CD8-positive, alpha-beta T cell (primary cell): ENCODE measurements at regions of chr2 and their contacts with region 1.

Region 1: DNA sequence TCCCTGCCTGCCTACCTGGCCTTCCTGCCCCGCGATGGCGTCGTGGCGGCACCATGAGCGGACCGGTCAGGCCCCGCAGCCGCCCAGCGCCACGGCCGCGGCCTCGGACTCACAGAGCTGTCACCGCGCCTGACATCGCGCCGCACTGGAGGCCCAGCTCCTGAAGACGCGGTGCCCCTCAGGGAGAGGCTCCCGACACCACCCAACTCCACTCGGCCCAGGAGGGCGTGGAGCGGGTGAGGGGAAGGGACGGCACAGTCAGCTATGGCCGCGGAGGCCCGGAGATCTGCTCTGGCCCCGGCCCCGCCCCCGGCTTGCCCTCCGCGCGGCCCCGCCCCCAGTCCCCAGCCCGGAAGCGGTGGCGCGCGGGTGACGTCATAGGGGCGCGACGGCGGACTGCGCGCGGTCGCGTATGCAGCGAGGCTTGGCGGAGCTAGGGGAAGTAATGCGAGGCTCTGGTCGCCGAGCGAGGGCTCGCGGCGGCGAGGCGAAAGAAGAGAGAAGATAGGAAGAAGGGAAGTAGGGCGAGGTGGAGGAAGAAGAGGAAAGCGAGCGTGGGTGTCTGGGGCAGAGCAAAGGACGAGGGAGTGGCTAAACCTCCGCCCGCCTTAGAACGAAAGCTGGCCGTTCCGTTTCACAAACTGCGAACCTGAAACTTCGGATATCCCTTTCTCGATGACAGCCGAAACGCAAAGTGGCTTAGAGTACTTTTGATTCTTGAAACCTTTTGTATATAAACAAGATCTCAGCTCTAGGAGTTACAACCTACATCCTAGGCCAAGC is at the start of gene SLC35F5:
- DNase-seq: peak; percentile 86 to 98 (median 94)
- ATAC-seq: peak; percentile 90
- H3K4me3 ChIP-seq: peak within 1 kb of the TSS; percentile 82 to 88
- H3K4me3 Mint-ChIP-seq: peak within 1 kb of the TSS; percentile 98
- H3K27ac ChIP-seq: peak within 1 kb of the TSS; percentile 97 to 99
- H3K27ac Mint-ChIP-seq: peak within 1 kb of the TSS; percentile 100
- H3K4me1 ChIP-seq: peaks cover 12% of the 10 kb centered on the region
- H3K4me1 Mint-ChIP-seq: peaks cover 30% of the 10 kb centered on the region
- H3K27me3 ChIP-seq: no peaks in the 10 kb centered on the region
- H3K27me3 Mint-ChIP-seq: no peaks in the 10 kb centered on the region
- CTCF ChIP-seq: no peak
- total RNA-seq, gene SLC35F5: 19.3 to 20.7 TPM

Region 2: DNA sequence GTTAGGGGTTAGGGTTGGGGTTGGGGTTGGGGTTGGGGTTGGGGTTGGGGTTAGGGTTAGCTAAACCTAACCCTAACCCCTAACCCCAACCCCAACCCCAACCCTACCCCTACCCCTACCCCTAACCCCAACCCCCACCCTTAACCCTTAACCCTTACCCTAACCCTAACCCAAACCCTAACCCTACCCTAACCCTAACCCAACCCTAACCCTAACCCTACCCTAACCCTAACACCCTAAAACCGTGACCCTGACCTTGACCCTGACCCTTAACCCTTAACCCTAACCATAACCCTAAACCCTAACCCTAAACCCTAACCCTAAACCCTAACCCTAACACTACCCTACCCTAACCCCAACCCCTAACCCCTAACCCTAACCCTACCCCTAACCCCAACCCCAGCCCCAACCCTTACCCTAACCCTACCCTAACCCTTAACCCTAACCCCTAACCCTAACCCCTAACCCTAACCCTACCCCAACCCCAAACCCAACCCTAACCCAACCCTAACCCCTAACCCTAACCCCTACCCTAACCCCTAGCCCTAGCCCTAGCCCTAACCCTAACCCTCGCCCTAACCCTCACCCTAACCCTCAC is 153.6 kb before region 1 on chr2:
- CTCF ChIA-PET with region 1: no interaction called
- POLR2A ChIA-PET with region 1: no interaction called
- intact Hi-C with region 1: loop called in 1 of 2 experiments (anchors 10 kb)
- DNase-seq: peak in 2 of 9 experiments; percentile 13 to 33
- ATAC-seq: no peak
- H3K4me3 ChIP-seq: peak overlapping the region; percentile 52 to 55
- H3K4me3 Mint-ChIP-seq: peak overlapping the region; percentile 96
- H3K27ac ChIP-seq: peak overlapping the region; percentile 55 to 84
- H3K27ac Mint-ChIP-seq: peak overlapping the region; percentile 96
- H3K4me1 ChIP-seq: peaks cover 5% of the 10 kb centered on the region
- H3K4me1 Mint-ChIP-seq: peaks cover 7% of the 10 kb centered on the region
- H3K27me3 ChIP-seq: no peaks in the 10 kb centered on the region
- H3K27me3 Mint-ChIP-seq: no peaks in the 10 kb centered on the region
- CTCF ChIP-seq: no peak

Region 3: GRCh38 chr2:113959202-113959601 is 202.7 kb after region 1 on chr2:
- CTCF ChIA-PET with region 1: no interaction called
- POLR2A ChIA-PET with region 1: interaction called, 3 read pairs
- intact Hi-C with region 1: loop called in 1 of 2 experiments (anchors 10 kb)
- DNase-seq: no peak
- ATAC-seq: no peak
- H3K4me3 ChIP-seq: no peak overlapping the region
- H3K4me3 Mint-ChIP-seq: no peak overlapping the region
- H3K27ac ChIP-seq: no peak overlapping the region
- H3K27ac Mint-ChIP-seq: peak overlapping the region; percentile 66
- H3K4me1 ChIP-seq: no peaks in the 10 kb centered on the region
- H3K4me1 Mint-ChIP-seq: peaks cover 4% of the 10 kb centered on the region
- H3K27me3 ChIP-seq: no peaks in the 10 kb centered on the region
- H3K27me3 Mint-ChIP-seq: no peaks in the 10 kb centered on the region
- CTCF ChIP-seq: no peak

Region 4: DNA sequence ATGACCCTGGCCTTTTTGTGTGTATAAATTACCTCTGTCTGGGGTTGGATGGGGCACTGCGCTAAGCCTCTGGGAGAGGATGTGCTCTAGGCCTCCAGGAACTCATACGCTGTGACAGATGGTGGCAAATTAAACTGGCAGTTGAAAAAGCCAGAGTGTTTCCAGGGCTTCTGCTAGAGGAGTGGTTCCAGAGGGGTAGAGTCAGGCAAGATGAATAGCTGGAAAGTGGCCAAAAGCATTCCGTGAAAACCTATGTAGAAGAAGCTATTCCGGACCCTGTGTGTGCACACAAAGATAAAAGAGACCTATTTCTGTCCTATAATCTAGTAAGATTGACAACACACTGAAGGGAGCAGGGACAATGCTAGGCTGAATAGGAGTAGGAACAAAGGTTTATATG is 218.2 kb after region 1 on chr2:
- CTCF ChIA-PET with region 1: no interaction called
- POLR2A ChIA-PET with region 1: no interaction called
- intact Hi-C with region 1: loop called in 1 of 2 experiments (anchors 5 kb)
- DNase-seq: no peak
- ATAC-seq: no peak
- H3K4me3 ChIP-seq: no peak overlapping the region
- H3K4me3 Mint-ChIP-seq: no peak overlapping the region
- H3K27ac ChIP-seq: no peak overlapping the region
- H3K27ac Mint-ChIP-seq: no peak overlapping the region
- H3K4me1 ChIP-seq: no peaks in the 10 kb centered on the region
- H3K4me1 Mint-ChIP-seq: peaks cover 14% of the 10 kb centered on the region
- H3K27me3 ChIP-seq: no peaks in the 10 kb centered on the region
- H3K27me3 Mint-ChIP-seq: no peaks in the 10 kb centered on the region
- CTCF ChIP-seq: no peak